CD14-positive monocyte (primary cell): ENCODE measurements at regions of chr19 and their contacts with region 1.

Region 1: GRCh38 chr19:57682226-57682766 is 519 bp downstream of the ZNF551 start:
- DNase-seq: no peak
- H3K4me3 ChIP-seq: peak overlapping the region; percentile 74 to 97 (median 79)
- H3K4me3 Mint-ChIP-seq: peak overlapping the region; percentile 91 to 92
- H3K27ac ChIP-seq: peak overlapping the region; percentile 2 to 87
- H3K27ac Mint-ChIP-seq: peak overlapping the region in 6 of 7 donors; percentile 60 to 90 (median 79)
- H3K4me1 ChIP-seq: peaks cover 11 to 16% of the 10 kb centered on the region in 2 donors
- H3K4me1 Mint-ChIP-seq: peaks cover 19% of the 10 kb centered on the region
- H3K27me3 ChIP-seq: no peaks in the 10 kb centered on the region
- H3K27me3 Mint-ChIP-seq: peaks cover 2 to 15% (median 4%) of the 10 kb centered on the region in 3 donors
- CTCF ChIP-seq: no peak

Region 2: DNA sequence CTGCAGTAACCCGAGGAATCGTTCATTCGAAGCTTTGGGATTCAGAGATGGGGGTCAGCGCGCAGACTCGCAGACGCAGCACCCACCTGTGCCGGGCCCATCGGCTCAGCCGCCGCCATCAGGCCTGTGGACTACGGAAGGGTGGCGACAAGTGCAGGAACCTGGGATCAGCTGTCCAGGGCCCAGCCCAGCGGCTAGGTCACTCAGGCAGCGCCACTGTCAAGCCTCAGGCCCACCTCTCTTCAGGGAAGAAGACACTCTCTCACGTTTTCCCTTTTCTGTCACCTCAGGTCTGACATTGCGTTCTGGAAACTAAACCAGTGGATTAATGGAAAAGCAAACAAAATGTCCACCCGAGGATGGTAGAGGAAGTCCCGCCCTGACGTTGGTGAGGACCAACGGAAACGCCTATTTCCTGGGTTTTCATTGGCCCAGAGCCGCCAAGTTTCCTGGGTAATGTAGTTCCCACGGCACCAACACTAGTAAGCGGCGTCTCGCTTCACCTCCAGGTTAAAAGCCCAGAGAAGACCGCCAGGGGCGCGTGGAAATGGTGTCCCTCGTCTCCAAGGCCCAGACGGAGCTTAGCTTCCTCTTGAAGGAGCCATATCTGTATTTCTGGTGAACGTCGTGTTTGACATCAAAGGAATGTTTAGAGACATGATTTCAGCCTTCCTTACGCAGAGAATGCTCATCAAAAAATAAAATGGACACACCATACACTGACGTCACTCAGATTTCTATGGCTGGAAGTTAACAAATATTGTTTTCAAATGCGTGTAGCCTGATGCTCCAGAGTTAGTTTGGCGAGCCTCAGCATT is 204.9 kb before region 1 on chr19 and contains the start of gene ZNF772:
- intact Hi-C with region 1: loop called in 1 of 2 experiments (anchors 2 kb)
- DNase-seq: peak; percentile 90 to 95 (median 93)
- H3K4me3 ChIP-seq: peak within 1 kb of the TSS; percentile 82 to 95 (median 87)
- H3K4me3 Mint-ChIP-seq: peak within 1 kb of the TSS; percentile 79 to 92
- H3K27ac ChIP-seq: peak within 1 kb of the TSS; percentile 51 to 91
- H3K27ac Mint-ChIP-seq: peak within 1 kb of the TSS; percentile 67 to 92 (median 88)
- H3K4me1 ChIP-seq: peaks cover 12 to 15% of the 10 kb centered on the region in 2 donors
- H3K4me1 Mint-ChIP-seq: peaks cover 13% of the 10 kb centered on the region
- H3K27me3 ChIP-seq: no peaks in the 10 kb centered on the region
- H3K27me3 Mint-ChIP-seq: peaks cover 0 to 2% (median 0%) of the 10 kb centered on the region in 3 donors
- CTCF ChIP-seq: peak; percentile 73
- polyA plus RNA-seq, gene ZNF772: 0.32 to 1.2 (median 0.99) TPM

Region 3: GRCh38 chr19:57583521-57584416 is 98.5 kb before region 1 on chr19 and contains the start of gene ZIK1:
- intact Hi-C with region 1: loop called (anchors 2 to 5 kb)
- DNase-seq: peak; percentile 82 to 86 (median 84)
- H3K4me3 ChIP-seq: peak within 1 kb of the TSS; percentile 43 to 76 (median 45)
- H3K4me3 Mint-ChIP-seq: peak within 1 kb of the TSS; percentile 91 to 95
- H3K27ac ChIP-seq: no peak within 1 kb of the TSS
- H3K27ac Mint-ChIP-seq: peak within 1 kb of the TSS in 5 of 7 donors; percentile 9 to 64 (median 58)
- H3K4me1 ChIP-seq: peaks cover 15 to 23% of the 10 kb centered on the region in 2 donors
- H3K4me1 Mint-ChIP-seq: peaks cover 14% of the 10 kb centered on the region
- H3K27me3 ChIP-seq: no peaks in the 10 kb centered on the region
- H3K27me3 Mint-ChIP-seq: peaks cover 0 to 4% (median 2%) of the 10 kb centered on the region in 3 donors
- CTCF ChIP-seq: no peak
- polyA plus RNA-seq, gene ZIK1: 0.51 to 1.1 (median 1.0) TPM

Region 4: GRCh38 chr19:57599761-57600383 is 82.4 kb before region 1 on chr19 and contains the start of gene ZNF530:
- intact Hi-C with region 1: no loop called
- DNase-seq: peak; percentile 87 to 91 (median 88)
- H3K4me3 ChIP-seq: peak within 1 kb of the TSS; percentile 46 to 90 (median 78)
- H3K4me3 Mint-ChIP-seq: peak within 1 kb of the TSS; percentile 84 to 88
- H3K27ac ChIP-seq: peak within 1 kb of the TSS in 1 of 2 donors; percentile 67
- H3K27ac Mint-ChIP-seq: peak within 1 kb of the TSS in 3 of 7 donors; percentile 26 to 42 (median 40)
- H3K4me1 ChIP-seq: peaks cover 13 to 15% of the 10 kb centered on the region in 2 donors
- H3K4me1 Mint-ChIP-seq: peaks cover 14% of the 10 kb centered on the region
- H3K27me3 ChIP-seq: no peaks in the 10 kb centered on the region
- H3K27me3 Mint-ChIP-seq: peaks cover 0 to 2% (median 0%) of the 10 kb centered on the region in 3 donors
- CTCF ChIP-seq: no peak
- polyA plus RNA-seq, gene ZNF530: 0.72 to 1.3 (median 0.84) TPM

Region 5: GRCh38 chr19:57642396-57643046 is 39.8 kb before region 1 on chr19:
- intact Hi-C with region 1: no loop called
- DNase-seq: no peak
- H3K4me3 ChIP-seq: peak overlapping the region in 1 of 3 experiments; percentile 28
- H3K4me3 Mint-ChIP-seq: no peak overlapping the region
- H3K27ac ChIP-seq: no peak overlapping the region
- H3K27ac Mint-ChIP-seq: no peak overlapping the region
- H3K4me1 ChIP-seq: no peaks in the 10 kb centered on the region
- H3K4me1 Mint-ChIP-seq: no peaks in the 10 kb centered on the region
- H3K27me3 ChIP-seq: no peaks in the 10 kb centered on the region
- H3K27me3 Mint-ChIP-seq: no peaks in the 10 kb centered on the region
- CTCF ChIP-seq: no peak